Sigmoid colon (tissue), 7 donors: ENCODE measurements at regions of chr17 and their contacts with region 1.

Region 1: GRCh38 chr17:46212634-46213435 is 19.6 kb upstream of the KANSL1 start:
- DNase-seq: peak; percentile 81
- H3K4me3 ChIP-seq: no peak overlapping the region
- H3K27ac ChIP-seq: peak overlapping the region; percentile 15 to 70 (median 60)
- H3K4me1 ChIP-seq: peaks cover 0 to 38% (median 34%) of the 10 kb centered on the region in 4 donors
- H3K27me3 ChIP-seq: no peaks in the 10 kb centered on the region
- CTCF ChIP-seq: peak; percentile 73 to 92 (median 78)
- EP300 ChIP-seq: no peak
- POLR2A ChIP-seq: no peak

Region 2: DNA sequence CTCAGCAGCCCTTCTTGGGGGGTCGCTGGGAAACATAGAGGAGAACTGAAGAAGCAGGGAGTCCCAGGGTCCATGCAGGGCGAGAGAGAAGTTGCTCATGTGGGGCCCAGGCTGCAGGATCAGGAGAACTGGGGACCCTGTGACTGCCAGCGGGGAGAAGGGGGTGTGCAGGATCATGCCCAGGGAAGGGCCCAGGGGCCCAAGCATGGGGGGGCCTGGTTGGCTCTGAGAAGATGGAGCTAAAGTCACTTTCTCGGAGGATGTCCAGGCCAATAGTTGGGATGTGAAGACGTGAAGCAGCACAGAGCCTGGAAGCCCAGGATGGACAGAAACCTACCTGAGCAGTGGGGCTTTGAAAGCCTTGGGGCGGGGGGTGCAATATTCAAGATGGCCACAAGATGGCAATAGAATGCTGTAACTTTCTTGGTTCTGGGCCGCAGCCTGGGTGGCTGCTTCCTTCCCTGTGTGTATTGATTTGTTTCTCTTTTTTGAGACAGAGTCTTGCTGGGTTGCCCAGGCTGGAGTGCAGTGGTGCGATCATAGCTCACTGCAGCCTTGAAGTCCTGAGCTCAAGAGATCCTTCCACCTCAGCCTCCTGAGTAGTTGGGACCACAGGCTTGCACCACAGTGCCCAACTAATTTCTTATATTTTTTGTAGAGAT is 210.4 kb before region 1 on chr17:
- intact Hi-C with region 1: loop called (anchors 2 kb)
- DNase-seq: peak; percentile 84
- H3K4me3 ChIP-seq: no peak overlapping the region
- H3K27ac ChIP-seq: no peak overlapping the region
- H3K4me1 ChIP-seq: peaks cover 0 to 19% (median 8%) of the 10 kb centered on the region in 4 donors
- H3K27me3 ChIP-seq: no peaks in the 10 kb centered on the region
- CTCF ChIP-seq: peak; percentile 84 to 97 (median 94)
- EP300 ChIP-seq: no peak
- POLR2A ChIP-seq: no peak

Region 3: DNA sequence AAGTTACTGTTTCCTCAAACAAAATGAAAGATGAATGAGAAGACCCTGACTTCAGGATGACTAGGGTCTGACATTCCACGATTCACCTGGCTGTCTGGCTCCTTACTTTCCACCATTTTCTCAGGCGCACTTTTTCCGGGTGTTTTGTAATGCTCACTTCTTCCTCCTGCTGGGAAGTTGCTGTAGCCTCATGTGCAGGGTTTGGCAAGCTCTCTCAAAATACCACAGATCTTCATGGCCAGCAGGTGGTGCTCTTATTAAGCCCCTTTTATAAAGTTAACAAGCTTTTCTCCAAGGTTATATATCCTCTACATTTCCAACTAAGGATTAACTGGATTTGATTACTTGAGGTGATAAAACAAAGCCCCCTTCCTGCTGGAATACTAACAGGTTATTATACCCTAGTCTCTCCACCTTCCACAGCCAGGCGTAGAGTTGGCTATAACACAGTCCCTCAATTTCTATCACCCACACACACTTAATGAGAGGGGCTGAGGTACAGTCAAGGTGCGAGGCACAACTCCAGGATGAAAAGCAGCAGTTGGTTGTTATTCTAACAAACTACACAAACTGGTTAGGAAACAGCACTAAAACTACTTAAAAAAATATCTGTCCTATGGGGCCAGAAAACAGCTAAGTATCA is 168.4 kb before region 1 on chr17:
- intact Hi-C with region 1: loop called (anchors 1 kb)
- DNase-seq: peak; percentile 92
- H3K4me3 ChIP-seq: no peak overlapping the region
- H3K27ac ChIP-seq: peak overlapping the region; percentile 46 to 72 (median 66)
- H3K4me1 ChIP-seq: peaks cover 0 to 49% (median 38%) of the 10 kb centered on the region in 4 donors
- H3K27me3 ChIP-seq: no peaks in the 10 kb centered on the region
- CTCF ChIP-seq: peak; percentile 85 to 97 (median 96)
- EP300 ChIP-seq: peak in 1 of 4 donors; percentile 0
- POLR2A ChIP-seq: no peak